ENCODE measurements at regions of chr20 and their contacts with region 1.

Region 1: DNA sequence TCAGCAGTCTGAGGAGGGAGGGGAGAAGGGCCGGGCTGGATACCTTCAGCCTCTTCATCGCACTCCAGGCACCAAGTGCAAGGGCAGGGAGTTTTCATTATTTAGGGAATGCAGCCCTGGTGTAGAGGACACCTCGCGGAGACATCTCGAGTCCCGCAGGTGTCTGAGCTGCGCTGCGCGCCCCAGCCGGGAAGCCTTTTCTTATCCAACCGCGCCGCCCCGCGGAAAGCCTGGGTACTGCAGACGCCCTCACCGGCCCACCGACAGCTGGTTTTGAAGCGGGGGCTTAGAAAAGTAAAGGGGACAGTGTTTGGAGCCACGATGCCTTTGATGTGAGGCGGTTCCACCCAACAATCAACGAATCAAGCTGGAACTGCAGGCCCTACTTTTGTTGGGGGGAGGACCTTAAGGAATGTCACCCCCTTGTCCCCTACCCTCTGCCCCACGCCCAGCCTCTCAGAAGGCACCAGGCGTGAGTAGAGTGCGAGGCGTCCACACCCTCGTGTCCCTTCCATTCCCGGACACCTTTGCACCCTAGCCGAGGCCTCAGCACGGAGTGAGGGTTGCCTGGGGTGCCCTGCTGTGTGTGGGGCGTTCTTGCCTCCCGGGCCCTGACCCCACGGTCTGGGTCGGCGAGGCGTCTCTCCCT is 8.6 kb downstream of the NKX2-2 start:
- DNase-seq: peak in 2 of 3 donors; percentile 76 to 80
- ATAC-seq: peak; percentile 81
- H3K4me3 ChIP-seq: no peak overlapping the region
- H3K4me1 ChIP-seq: peaks cover 16% of the 10 kb centered on the region
- CTCF ChIP-seq: peak; percentile 93

Region 2: GRCh38 chr20:20837574-20838021 is 667.7 kb before region 1 on chr20:
- intact Hi-C with region 1: loop called in 1 of 2 experiments (anchors 10 kb)
- DNase-seq: peak in 2 of 3 donors; percentile 62 to 73
- ATAC-seq: peak; percentile 61
- H3K4me3 ChIP-seq: no peak overlapping the region
- H3K4me1 ChIP-seq: no peaks in the 10 kb centered on the region
- CTCF ChIP-seq: no peak

Region 3: GRCh38 chr20:20860078-20860806 is 645.0 kb before region 1 on chr20:
- intact Hi-C with region 1: loop called (anchors 10 kb)
- DNase-seq: peak; percentile 65 to 96 (median 85)
- ATAC-seq: peak; percentile 87
- H3K4me3 ChIP-seq: no peak overlapping the region
- H3K4me1 ChIP-seq: no peaks in the 10 kb centered on the region
- CTCF ChIP-seq: peak; percentile 83

Region 4: DNA sequence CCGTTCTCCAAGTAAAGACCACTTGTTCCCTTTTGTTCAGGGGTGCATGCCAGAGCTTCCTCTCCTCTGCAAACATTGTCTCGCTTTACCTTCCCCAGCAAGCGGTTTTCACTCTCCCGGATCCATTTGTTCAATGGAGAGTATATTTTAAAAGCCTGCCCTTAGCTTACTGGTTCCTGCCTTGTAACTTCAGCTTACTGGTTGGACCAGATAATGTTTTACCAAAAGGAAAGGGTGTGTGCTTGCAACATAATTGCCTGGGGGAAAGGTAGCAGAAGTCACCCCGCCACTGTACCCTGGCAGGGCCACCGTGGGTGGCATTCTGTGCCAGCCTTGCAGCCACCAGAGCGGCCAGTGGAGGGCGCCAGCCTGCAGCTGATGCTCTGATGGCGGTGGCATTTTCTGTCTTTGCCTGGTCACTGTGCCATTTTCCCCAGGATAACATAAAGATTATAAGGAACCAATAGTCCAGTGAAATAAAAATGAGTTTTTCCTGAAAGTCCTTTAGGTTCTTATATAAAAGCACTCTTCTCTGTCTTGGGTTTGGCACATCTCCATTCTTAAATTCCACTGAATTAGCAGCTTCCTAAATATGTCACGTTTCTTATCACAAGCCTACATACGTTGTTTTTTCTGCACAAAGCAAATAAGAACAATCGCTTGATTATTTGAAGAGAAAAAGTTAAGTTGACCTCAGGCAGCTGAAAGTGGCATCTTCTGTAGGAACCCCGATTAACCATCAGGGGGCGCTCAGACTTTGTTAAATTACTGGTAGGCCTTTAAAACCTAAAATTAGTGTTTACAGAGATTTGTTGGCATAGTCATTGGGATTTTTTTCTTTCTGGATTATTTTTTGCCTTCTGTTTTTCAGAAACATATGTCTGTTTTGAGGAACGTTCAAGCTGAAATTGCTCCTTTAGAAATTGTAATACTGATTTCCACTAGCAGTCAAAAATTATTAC is 269.5 kb before region 1 on chr20:
- intact Hi-C with region 1: loop called (anchors 5 kb)
- DNase-seq: peak in 2 of 3 donors; percentile 77 to 80
- ATAC-seq: peak; percentile 88
- H3K4me3 ChIP-seq: no peak overlapping the region
- H3K4me1 ChIP-seq: peaks cover 4% of the 10 kb centered on the region
- CTCF ChIP-seq: peak; percentile 50

Measured in mucosa of descending colon (tissue), 3 donors.